Panc1 (cell line): ENCODE measurements at regions of chr3 and their contacts with region 1.

Region 1: GRCh38 chr3:184874709-184875644 is 63.0 kb downstream of the VPS8 start:
- DNase-seq: peak; percentile 25
- ATAC-seq: no peak; the same call in 1 of the 2 replicates
- H3K4me3 ChIP-seq: no peak overlapping the region
- H3K27ac ChIP-seq: no peak overlapping the region
- H3K4me1 ChIP-seq: no peaks in the 10 kb centered on the region
- H3K27me3 ChIP-seq: no peaks in the 10 kb centered on the region
- CTCF ChIP-seq: peak; percentile 73; the same call in 1 of the 2 replicates

Region 2: GRCh38 chr3:184911570-184911969 is 36.6 kb after region 1 on chr3:
- CTCF ChIA-PET with region 1: interaction called, 12 read pairs
- POLR2A ChIA-PET with region 1: no interaction called
- in situ Hi-C with region 1: no loop called
- intact Hi-C with region 1: no loop called
- DNase-seq: no peak
- ATAC-seq: no peak
- H3K4me3 ChIP-seq: no peak overlapping the region
- H3K27ac ChIP-seq: no peak overlapping the region
- H3K4me1 ChIP-seq: no peaks in the 10 kb centered on the region
- H3K27me3 ChIP-seq: no peaks in the 10 kb centered on the region
- CTCF ChIP-seq: no peak

Region 3: DNA sequence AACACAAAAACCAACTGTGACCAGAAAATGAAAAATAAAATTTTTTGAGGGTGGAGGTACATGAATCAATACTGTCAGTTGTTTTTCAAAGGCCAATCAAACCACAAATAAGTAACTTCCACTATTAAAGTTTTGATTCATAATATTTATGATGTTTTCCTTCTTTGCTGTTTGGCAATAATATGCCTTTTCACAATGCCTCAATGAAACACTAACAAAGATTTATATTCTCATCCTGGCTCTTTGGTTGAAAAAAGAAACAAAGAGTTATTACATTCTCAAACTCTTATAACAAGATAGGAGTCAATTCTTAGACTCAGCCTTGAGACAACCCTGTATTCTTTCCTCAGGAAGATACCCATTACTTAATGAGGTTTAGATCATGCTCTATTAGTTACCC is 214.8 kb after region 1 on chr3:
- CTCF ChIA-PET with region 1: interaction called, 10 read pairs
- POLR2A ChIA-PET with region 1: no interaction called
- in situ Hi-C with region 1: no loop called
- intact Hi-C with region 1: no loop called
- DNase-seq: no peak
- ATAC-seq: no peak
- H3K4me3 ChIP-seq: no peak overlapping the region
- H3K27ac ChIP-seq: no peak overlapping the region
- H3K4me1 ChIP-seq: no peaks in the 10 kb centered on the region
- H3K27me3 ChIP-seq: peaks cover 16% of the 10 kb centered on the region
- CTCF ChIP-seq: no peak

Region 4: DNA sequence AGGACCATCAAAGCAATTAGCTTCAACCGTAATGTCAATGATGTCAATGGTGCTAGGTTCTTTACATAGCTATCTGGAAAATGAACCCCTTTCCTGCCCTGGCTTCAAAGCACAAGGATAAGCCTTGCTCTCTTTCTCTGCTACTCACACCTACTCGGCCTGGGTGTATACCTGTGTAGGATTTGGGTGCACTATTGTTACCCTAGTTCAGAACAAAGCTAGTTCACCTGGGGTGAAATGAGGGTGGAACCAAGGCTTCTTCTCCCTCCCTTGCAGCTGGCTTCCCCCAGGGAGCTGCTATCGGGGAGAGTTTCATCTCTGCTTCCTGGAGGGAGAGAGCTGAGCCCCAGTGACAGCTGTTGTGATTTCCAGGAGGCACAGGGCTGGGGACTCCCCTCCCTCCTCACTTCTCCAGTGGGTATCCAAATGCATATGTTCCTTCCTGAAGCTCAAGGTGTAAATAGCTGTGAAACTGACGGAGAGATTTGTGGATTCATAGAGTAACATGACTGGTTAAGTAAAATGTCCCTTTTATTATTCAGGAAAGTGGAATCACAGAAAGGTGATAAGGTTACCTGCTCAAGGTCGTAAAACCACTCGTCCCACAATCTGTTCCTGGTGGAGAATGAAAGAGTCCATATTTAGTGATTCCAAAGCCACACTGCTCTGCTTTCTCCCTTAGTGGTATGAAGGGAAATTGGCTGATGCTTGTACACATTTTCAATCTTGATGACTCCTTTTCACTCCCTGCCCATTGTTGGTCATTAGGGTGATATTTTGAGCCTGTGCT is 289.6 kb after region 1 on chr3:
- CTCF ChIA-PET with region 1: interaction called, 13 read pairs
- POLR2A ChIA-PET with region 1: no interaction called
- in situ Hi-C with region 1: no loop called
- intact Hi-C with region 1: no loop called
- DNase-seq: no peak
- ATAC-seq: peak; percentile 43; the same call in 1 of the 2 replicates
- H3K4me3 ChIP-seq: no peak overlapping the region
- H3K27ac ChIP-seq: no peak overlapping the region
- H3K4me1 ChIP-seq: no peaks in the 10 kb centered on the region
- H3K27me3 ChIP-seq: peaks cover 12% of the 10 kb centered on the region
- CTCF ChIP-seq: no peak

Region 5: GRCh38 chr3:185176750-185177359 is 301.9 kb after region 1 on chr3:
- CTCF ChIA-PET with region 1: no interaction called
- POLR2A ChIA-PET with region 1: no interaction called
- in situ Hi-C with region 1: no loop called
- intact Hi-C with region 1: loop called (anchors 2 kb)
- DNase-seq: peak; percentile 27
- ATAC-seq: no peak
- H3K4me3 ChIP-seq: no peak overlapping the region
- H3K27ac ChIP-seq: no peak overlapping the region
- H3K4me1 ChIP-seq: no peaks in the 10 kb centered on the region
- H3K27me3 ChIP-seq: peaks cover 11% of the 10 kb centered on the region
- CTCF ChIP-seq: peak; percentile 80; the same call in 1 of the 2 replicates

Region 6: DNA sequence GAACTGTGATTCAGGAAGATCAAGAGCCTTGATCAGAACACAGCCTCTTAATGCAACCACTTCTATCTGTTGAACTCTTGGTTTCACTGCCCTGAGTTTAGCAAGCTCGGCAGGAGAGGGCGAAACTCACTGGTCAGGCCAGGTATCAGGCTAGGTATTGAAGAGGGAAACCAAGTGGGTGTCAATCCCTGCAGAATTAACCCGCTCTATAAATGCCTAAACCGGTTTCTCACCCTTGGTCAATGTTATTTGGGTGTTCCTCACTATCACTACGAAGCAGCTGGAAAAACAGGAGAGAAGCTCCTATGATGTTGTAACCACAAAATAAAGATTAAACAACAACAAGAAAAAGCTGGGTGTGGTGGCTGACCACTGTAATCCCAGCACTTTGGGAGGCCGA is 653.6 kb after region 1 on chr3:
- CTCF ChIA-PET with region 1: interaction called, 11 read pairs
- POLR2A ChIA-PET with region 1: no interaction called
- in situ Hi-C with region 1: no loop called
- intact Hi-C with region 1: no loop called
- DNase-seq: no peak
- ATAC-seq: peak; percentile 22
- H3K4me3 ChIP-seq: no peak overlapping the region
- H3K27ac ChIP-seq: no peak overlapping the region
- H3K4me1 ChIP-seq: no peaks in the 10 kb centered on the region
- H3K27me3 ChIP-seq: no peaks in the 10 kb centered on the region
- CTCF ChIP-seq: no peak